CD14-positive monocyte (primary cell): ENCODE measurements at regions of chr1 and their contacts with region 1.

Region 1: GRCh38 chr1:17059739-17060460 is 6.1 kb upstream of the SDHB start:
- DNase-seq: peak; percentile 70 to 82 (median 82)
- H3K4me3 ChIP-seq: peak overlapping the region in 1 of 3 experiments; percentile 56
- H3K4me3 Mint-ChIP-seq: peak overlapping the region; percentile 6 to 28
- H3K27ac ChIP-seq: peak overlapping the region; percentile 43 to 83
- H3K27ac Mint-ChIP-seq: peak overlapping the region; percentile 86 to 96 (median 92)
- H3K4me1 ChIP-seq: peaks cover 51 to 58% of the 10 kb centered on the region in 2 donors
- H3K4me1 Mint-ChIP-seq: peaks cover 44% of the 10 kb centered on the region
- H3K27me3 ChIP-seq: no peaks in the 10 kb centered on the region
- H3K27me3 Mint-ChIP-seq: peaks cover 0 to 1% (median 0%) of the 10 kb centered on the region in 3 donors
- CTCF ChIP-seq: peak; percentile 90

Region 2: DNA sequence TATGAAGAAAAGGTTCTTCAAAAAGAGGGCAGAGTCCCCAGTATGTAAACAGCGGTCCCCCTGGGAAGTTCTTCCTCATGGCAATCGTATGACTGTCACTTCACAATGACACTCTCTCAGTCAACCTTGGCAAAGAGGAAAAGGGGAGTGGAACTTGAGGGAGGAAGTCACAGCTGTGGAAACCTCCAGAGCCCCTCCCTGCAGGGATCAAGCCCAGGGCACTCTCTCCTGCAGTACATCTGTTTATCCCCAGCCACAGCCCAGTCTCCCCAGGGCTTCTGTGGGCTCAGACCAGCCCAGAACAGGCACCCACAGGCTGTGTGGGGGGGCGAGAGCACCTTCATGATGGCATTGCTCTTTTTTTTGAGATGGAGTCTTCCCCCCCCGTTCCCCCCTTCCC is 50.2 kb before region 1 on chr1:
- intact Hi-C with region 1: loop called in 1 of 2 experiments (anchors 10 kb)
- DNase-seq: peak; percentile 51 to 69 (median 58)
- H3K4me3 ChIP-seq: peak overlapping the region in 1 of 3 experiments; percentile 91
- H3K4me3 Mint-ChIP-seq: peak overlapping the region; percentile 86 to 90
- H3K27ac ChIP-seq: peak overlapping the region in 1 of 2 donors; percentile 48
- H3K27ac Mint-ChIP-seq: peak overlapping the region; percentile 33 to 87 (median 73)
- H3K4me1 ChIP-seq: peaks cover 43 to 44% of the 10 kb centered on the region in 2 donors
- H3K4me1 Mint-ChIP-seq: peaks cover 46% of the 10 kb centered on the region
- H3K27me3 ChIP-seq: no peaks in the 10 kb centered on the region
- H3K27me3 Mint-ChIP-seq: peaks cover 4 to 5% (median 5%) of the 10 kb centered on the region in 3 donors
- CTCF ChIP-seq: no peak

Region 3: DNA sequence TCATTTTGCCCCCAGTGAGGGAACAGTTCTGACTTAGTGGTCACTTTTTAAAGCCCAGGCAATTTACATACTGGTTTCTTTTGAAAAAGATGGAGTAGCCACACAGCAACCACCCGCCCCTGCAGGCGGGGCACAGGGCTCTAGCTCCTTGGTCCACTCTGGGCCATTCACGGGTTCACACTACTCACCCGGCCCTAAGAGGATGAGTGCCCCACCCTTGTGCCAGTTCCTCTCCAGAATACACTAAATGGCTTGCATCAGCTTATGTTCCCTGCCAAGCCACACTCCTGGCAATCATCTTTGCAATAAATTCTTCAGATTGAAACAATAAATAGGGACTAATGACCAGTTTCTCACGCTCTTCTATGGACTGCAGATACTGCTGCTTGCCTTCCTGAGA is 32.5 kb before region 1 on chr1:
- intact Hi-C with region 1: no loop called
- DNase-seq: no peak
- H3K4me3 ChIP-seq: no peak overlapping the region
- H3K4me3 Mint-ChIP-seq: no peak overlapping the region
- H3K27ac ChIP-seq: peak overlapping the region; percentile 18 to 38
- H3K27ac Mint-ChIP-seq: peak overlapping the region in 5 of 7 donors; percentile 24 to 64 (median 53)
- H3K4me1 ChIP-seq: peaks cover 21 to 28% of the 10 kb centered on the region in 2 donors
- H3K4me1 Mint-ChIP-seq: peaks cover 36% of the 10 kb centered on the region
- H3K27me3 ChIP-seq: no peaks in the 10 kb centered on the region
- H3K27me3 Mint-ChIP-seq: no peaks in the 10 kb centered on the region
- CTCF ChIP-seq: no peak

Region 4: DNA sequence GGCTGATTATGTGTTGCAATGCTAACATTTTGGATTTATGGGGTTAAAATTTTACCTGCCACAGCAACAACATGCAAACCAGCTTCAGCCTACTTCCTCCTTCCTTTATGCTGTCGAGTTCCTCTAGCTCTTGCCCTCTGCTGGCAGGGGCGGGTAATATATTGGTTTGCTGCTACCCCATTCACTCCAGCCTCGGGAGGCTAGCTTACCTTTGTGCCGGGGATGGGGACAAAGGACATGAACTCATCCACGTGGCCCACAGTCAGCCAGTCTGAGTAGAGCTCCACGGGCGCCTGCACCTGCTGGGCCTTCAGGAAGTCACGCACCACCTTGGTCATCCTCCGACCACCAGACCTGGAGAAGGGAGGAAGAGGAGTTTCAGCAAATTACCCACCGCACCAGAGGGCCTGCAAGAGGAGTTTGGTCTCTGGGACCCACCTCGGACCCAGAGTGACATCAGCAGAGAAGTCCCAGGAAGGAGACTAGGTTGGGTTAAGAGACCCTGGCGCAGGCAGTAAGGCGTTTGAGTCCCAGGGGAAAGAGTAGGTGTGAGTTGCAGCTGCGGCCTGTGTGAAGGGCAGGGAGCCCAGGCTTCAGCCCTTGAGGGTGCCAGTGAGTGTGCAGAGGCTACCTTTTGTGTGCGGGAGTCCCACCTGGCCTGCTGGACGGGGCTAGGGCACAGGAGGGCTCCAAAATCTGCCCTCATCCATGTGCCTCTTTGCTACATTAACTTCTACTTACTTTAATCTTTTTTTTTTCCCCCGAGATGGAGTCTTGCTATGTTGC is 15.8 kb after region 1 on chr1:
- intact Hi-C with region 1: loop called (anchors 1 to 2 kb)
- DNase-seq: peak; percentile 51 to 64 (median 57)
- H3K4me3 ChIP-seq: no peak overlapping the region
- H3K4me3 Mint-ChIP-seq: no peak overlapping the region
- H3K27ac ChIP-seq: peak overlapping the region in 1 of 2 donors; percentile 12
- H3K27ac Mint-ChIP-seq: peak overlapping the region in 4 of 7 donors; percentile 50 to 74 (median 62)
- H3K4me1 ChIP-seq: peaks cover 9 to 16% of the 10 kb centered on the region in 2 donors
- H3K4me1 Mint-ChIP-seq: peaks cover 31% of the 10 kb centered on the region
- H3K27me3 ChIP-seq: no peaks in the 10 kb centered on the region
- H3K27me3 Mint-ChIP-seq: peaks cover 0 to 1% (median 1%) of the 10 kb centered on the region in 3 donors
- CTCF ChIP-seq: peak; percentile 80

Region 5: GRCh38 chr1:17119076-17119772 is 59.3 kb after region 1 on chr1 and contains the start of gene PADI2:
- intact Hi-C with region 1: loop called (anchors 2 to 5 kb)
- DNase-seq: peak; percentile 65 to 71 (median 67)
- H3K4me3 ChIP-seq: peak within 1 kb of the TSS; percentile 60 to 75 (median 69)
- H3K4me3 Mint-ChIP-seq: peak within 1 kb of the TSS; percentile 83 to 97
- H3K27ac ChIP-seq: peak within 1 kb of the TSS; percentile 60 to 76
- H3K27ac Mint-ChIP-seq: peak within 1 kb of the TSS; percentile 63 to 94 (median 88)
- H3K4me1 ChIP-seq: peaks cover 91 to 92% of the 10 kb centered on the region in 2 donors
- H3K4me1 Mint-ChIP-seq: peaks cover 86% of the 10 kb centered on the region
- H3K27me3 ChIP-seq: no peaks in the 10 kb centered on the region
- H3K27me3 Mint-ChIP-seq: peaks cover 2 to 8% (median 8%) of the 10 kb centered on the region in 3 donors
- CTCF ChIP-seq: no peak
- polyA plus RNA-seq, gene PADI2: 18.6 to 61.7 (median 32.6) TPM

Region 6: DNA sequence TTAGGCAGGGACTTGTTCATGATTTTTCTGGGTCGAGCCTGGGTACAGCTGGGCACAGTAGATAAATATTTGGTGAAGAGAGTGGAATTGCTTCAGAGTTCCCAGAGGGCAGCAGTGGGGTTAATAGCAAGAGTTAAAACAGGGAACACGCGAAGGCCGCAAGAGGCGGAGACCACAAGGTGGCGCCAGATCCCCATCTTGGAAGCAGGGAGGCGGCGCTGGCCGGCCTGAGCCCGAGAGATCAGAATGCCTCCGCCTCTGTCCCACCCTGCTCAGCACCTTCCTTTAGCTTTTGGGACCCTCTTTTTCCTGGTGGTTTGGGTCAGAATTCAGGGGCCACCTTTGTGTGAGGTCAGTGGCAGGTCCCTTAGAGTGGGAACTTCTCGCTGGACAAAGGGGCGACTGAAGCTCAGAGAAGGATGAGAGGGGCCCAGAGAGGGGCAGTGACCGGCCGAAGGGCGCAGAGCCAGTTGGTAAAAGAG is 65.9 kb after region 1 on chr1:
- intact Hi-C with region 1: loop called (anchors 2 to 5 kb)
- DNase-seq: peak; percentile 82 to 83 (median 83)
- H3K4me3 ChIP-seq: no peak overlapping the region
- H3K4me3 Mint-ChIP-seq: no peak overlapping the region
- H3K27ac ChIP-seq: no peak overlapping the region
- H3K27ac Mint-ChIP-seq: peak overlapping the region; percentile 33 to 88 (median 60)
- H3K4me1 ChIP-seq: peaks cover 56 to 57% of the 10 kb centered on the region in 2 donors
- H3K4me1 Mint-ChIP-seq: peaks cover 50% of the 10 kb centered on the region
- H3K27me3 ChIP-seq: no peaks in the 10 kb centered on the region
- H3K27me3 Mint-ChIP-seq: peaks cover 0 to 2% (median 0%) of the 10 kb centered on the region in 3 donors
- CTCF ChIP-seq: peak; percentile 93

Region 7: DNA sequence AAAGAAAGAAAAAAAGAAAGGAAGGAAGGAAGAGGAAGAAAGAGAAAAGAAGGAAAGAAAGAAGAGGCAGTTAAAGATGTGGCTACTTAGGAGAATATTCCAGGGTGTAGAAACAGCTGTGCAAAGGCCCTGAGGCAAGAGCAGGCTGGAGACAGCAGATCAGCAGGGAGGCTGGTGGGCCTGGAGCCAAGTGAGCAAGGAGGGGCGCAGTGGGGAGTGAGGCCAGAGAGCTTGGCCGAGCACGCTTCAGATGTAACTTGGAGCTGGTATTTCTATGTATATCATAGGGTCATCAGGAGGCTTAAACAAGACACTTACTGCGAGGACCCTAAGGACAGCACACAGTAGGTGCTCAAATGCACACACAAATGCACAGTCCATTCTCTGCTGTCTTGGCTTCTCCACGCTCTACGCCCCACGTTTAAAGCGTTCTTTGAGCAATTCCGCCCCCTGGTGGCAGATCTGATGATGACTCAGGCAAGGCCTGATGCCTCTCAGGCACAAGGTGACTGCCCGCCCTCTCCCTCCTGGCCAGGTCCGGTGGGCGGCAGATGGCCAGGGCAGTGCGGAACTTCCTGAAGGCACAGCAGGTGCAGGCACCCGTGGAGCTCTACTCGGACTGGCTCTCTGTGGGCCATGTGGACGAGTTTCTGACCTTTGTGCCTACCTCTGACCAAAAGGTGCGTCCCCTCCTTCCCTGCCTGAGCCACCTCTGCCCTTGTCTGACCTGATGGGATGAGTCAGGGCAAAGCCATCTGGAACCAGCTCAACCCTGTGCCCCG is 177.1 kb after region 1 on chr1:
- intact Hi-C with region 1: loop called (anchors 2 kb)
- DNase-seq: peak; percentile 81 to 86 (median 85)
- H3K4me3 ChIP-seq: no peak overlapping the region
- H3K4me3 Mint-ChIP-seq: no peak overlapping the region
- H3K27ac ChIP-seq: no peak overlapping the region
- H3K27ac Mint-ChIP-seq: peak overlapping the region in 3 of 7 donors; percentile 41 to 63 (median 55)
- H3K4me1 ChIP-seq: peaks cover 12% of the 10 kb centered on the region in 2 donors
- H3K4me1 Mint-ChIP-seq: peaks cover 22% of the 10 kb centered on the region
- H3K27me3 ChIP-seq: no peaks in the 10 kb centered on the region
- H3K27me3 Mint-ChIP-seq: peaks cover 0 to 5% (median 5%) of the 10 kb centered on the region in 3 donors
- CTCF ChIP-seq: peak; percentile 93

Region 8: GRCh38 chr1:17405898-17406759 is 346.2 kb after region 1 on chr1:
- intact Hi-C with region 1: loop called in 1 of 2 experiments (anchors 5 kb)
- DNase-seq: peak; percentile 50 to 67 (median 51)
- H3K4me3 ChIP-seq: no peak overlapping the region
- H3K4me3 Mint-ChIP-seq: no peak overlapping the region
- H3K27ac ChIP-seq: no peak overlapping the region
- H3K27ac Mint-ChIP-seq: no peak overlapping the region
- H3K4me1 ChIP-seq: peaks cover 0 to 5% of the 10 kb centered on the region in 2 donors
- H3K4me1 Mint-ChIP-seq: peaks cover 7% of the 10 kb centered on the region
- H3K27me3 ChIP-seq: no peaks in the 10 kb centered on the region
- H3K27me3 Mint-ChIP-seq: peaks cover 0 to 2% (median 0%) of the 10 kb centered on the region in 3 donors
- CTCF ChIP-seq: peak; percentile 86